KBM-7 (cell line): ENCODE measurements at regions of chr17 and their contacts with region 1.

Region 1: GRCh38 chr17:50853015-50853615 is 13.0 kb downstream of the TOB1 start:
- DNase-seq: no peak

Region 2: GRCh38 chr17:50715471-50715870 is 137.6 kb before region 1 on chr17:
- in situ Hi-C with region 1: no loop called
- DNase-seq: no peak

Region 3: DNA sequence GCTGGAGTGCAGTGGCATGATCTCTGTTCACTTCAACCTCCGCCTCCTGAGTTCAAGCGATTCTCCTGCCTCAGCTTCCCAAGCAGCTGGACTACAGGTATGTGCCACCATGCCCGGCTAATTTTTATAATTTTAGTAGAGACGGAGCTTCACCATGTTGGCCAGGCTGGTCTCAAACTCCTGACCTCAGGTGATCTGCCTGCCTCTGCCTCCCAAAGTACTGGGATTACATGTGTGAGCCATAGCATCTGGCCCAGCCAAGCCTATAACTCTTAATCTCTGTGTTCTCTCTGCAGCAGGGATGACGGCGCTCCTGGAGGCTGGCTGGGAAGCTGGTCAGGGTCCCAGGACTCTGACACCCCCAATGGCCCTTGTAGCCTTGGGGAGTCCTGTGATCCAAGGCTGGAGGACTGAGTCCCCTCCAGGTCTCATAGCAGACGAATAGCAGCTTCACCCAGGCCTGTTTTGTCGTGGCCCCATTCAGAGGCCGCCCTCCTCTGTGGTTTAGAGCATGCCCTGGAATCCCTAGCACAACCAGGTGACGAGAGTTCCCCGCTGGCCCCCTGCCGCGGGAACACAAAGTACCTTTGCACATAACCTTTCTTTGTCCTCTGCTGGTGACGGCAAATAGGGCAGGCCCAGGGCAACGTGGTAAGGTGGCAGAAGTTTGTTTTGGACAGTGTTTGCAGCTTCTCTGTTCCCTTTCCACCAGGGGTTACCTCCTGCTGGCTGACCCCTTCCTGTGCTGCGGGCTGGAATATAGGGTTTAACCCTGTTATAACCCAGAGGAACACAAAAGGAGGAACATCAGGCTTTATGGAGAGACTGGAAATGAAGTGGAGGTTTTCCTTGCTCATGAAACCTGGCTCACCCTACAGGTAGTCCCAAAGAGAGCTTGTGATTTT is 56.0 kb after region 1 on chr17:
- in situ Hi-C with region 1: no loop called
- DNase-seq: peak; percentile 54

Region 4: DNA sequence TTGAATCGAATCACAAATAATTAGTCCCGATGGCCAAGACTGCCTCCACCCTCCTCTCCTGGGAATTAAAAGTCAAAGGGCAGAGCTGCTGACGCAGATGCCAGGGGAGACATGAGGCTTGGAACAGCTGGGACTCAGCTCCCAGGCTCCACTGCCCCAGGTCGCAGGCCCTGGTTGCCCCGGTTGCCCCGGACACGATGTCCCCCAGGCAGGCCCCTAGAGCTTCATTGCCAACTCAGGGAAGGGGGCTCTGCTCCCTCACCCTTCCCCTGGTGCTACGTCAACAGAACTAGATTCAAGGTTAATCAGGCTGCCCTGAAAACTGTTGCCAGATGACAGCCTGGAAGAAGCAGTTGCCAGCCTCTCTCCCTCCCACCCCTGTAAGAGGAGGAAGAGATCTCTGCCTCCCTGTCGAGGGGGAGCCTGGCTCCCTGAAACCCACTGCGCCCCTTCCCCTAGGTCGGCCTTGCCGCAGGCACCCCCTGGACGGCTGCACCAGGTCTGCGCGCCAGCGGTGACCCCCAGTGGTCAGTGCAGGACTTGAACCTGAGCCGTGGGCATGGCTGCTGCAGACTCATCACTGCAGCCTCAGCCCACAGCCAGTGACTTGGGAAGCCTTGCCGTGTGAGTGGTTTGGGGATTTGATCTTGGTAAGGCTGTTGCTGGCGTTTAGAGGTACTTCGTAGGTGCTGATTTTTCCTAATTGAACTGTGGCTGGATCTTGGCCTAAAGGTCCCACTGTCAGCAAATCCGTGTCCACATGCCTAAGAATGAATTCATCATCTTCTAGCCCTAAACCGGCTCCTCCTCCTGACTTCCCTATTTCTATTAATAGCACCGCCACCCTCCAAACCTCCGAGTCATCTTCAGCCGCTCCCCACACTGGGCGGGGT is 97.1 kb after region 1 on chr17:
- in situ Hi-C with region 1: loop called (anchors 10 kb)
- DNase-seq: peak; percentile 90